CD4-positive, alpha-beta memory T cell (primary cell): ENCODE measurements at regions of chr2 and their contacts with region 1.

Region 1: GRCh38 chr2:290090-290722 is 2.3 kb upstream of the ALKAL2 start:
- DNase-seq: peak in 4 of 5 donors; percentile 25 to 36 (median 31)
- H3K4me3 ChIP-seq: peak overlapping the region in 1 of 2 donors; percentile 33
- H3K4me3 Mint-ChIP-seq: peak overlapping the region; percentile 42 to 87 (median 78)
- H3K27ac ChIP-seq: no peak overlapping the region
- H3K27ac Mint-ChIP-seq: no peak overlapping the region
- H3K4me1 ChIP-seq: peaks cover 18% of the 10 kb centered on the region
- H3K4me1 Mint-ChIP-seq: peaks cover 4 to 18% (median 9%) of the 10 kb centered on the region in 4 donors
- H3K27me3 ChIP-seq: peaks cover 13% of the 10 kb centered on the region
- H3K27me3 Mint-ChIP-seq: peaks cover 25 to 31% of the 10 kb centered on the region in 2 donors

Region 2: DNA sequence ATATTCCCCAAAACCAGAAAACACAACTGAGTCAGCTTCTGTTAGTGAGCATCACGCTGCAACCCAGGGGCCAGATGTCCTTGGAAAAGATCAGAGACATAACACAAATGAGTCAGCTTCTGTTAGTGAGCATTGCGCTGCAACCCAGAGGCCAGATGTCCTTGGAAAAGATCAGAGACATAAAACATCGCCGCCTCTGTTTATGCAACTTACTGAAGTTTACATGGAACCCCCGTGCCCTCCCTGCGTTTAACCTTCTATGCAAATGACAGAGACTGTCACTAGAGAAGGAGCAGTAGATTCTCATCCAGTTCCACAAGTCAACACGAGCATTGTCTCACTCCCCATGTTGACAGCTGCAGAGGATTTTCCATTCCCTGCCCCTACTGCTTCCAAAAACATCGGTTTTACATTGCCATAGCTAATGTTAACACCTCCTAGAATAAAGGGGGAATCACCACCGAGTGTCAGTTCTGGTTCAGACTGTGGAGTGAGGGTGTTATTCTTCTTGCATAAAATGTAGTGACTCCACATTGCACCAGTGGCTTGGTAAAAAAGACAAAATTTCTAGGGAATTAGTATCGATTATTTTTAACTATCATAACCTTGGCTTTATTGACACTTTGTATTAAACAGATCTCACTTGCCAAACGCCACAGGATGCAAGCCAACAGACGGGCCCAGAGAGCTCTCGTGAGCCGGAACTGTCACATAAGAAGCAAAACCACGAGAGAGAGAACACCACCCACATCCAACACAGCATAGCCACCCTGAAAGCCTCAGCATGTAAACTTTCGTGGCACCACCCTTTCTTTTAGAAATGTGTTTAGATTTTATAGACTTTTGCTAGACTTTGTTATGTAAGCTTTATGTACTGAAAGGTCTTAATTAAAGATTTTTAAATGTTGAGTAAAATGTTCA is 114.1 kb before region 1 on chr2:
- CTCF ChIA-PET with region 1: interaction called, 5 read pairs
- POLR2A ChIA-PET with region 1: interaction called, 4 read pairs
- intact Hi-C with region 1: loop called (anchors 1 kb)
- DNase-seq: peak; percentile 61 to 72 (median 69)
- H3K4me3 ChIP-seq: peak overlapping the region; percentile 11 to 45
- H3K4me3 Mint-ChIP-seq: peak overlapping the region; percentile 42 to 87 (median 72)
- H3K27ac ChIP-seq: no peak overlapping the region
- H3K27ac Mint-ChIP-seq: peak overlapping the region; percentile 69 to 93 (median 85)
- H3K4me1 ChIP-seq: peaks cover 37% of the 10 kb centered on the region
- H3K4me1 Mint-ChIP-seq: peaks cover 35 to 56% (median 38%) of the 10 kb centered on the region in 4 donors
- H3K27me3 ChIP-seq: no peaks in the 10 kb centered on the region
- H3K27me3 Mint-ChIP-seq: no peaks in the 10 kb centered on the region

Region 3: GRCh38 chr2:246489-247144 is 43.6 kb before region 1 on chr2:
- CTCF ChIA-PET with region 1: interaction called, 9 read pairs
- POLR2A ChIA-PET with region 1: no interaction called
- intact Hi-C with region 1: loop called (anchors 1 kb)
- DNase-seq: peak; percentile 33 to 54 (median 45)
- H3K4me3 ChIP-seq: no peak overlapping the region
- H3K4me3 Mint-ChIP-seq: no peak overlapping the region
- H3K27ac ChIP-seq: no peak overlapping the region
- H3K27ac Mint-ChIP-seq: peak overlapping the region in 2 of 7 donors; percentile 13 to 56
- H3K4me1 ChIP-seq: no peaks in the 10 kb centered on the region
- H3K4me1 Mint-ChIP-seq: peaks cover 0 to 5% (median 4%) of the 10 kb centered on the region in 4 donors
- H3K27me3 ChIP-seq: no peaks in the 10 kb centered on the region
- H3K27me3 Mint-ChIP-seq: no peaks in the 10 kb centered on the region